ENCODE measurements at regions of chr15 and their contacts with region 1.

Region 1: GRCh38 chr15:74768771-74769342 is 13.0 kb upstream of the CSK start:
- DNase-seq: peak; percentile 42
- ATAC-seq: peak; percentile 67
- H3K4me3 ChIP-seq: peak overlapping the region; percentile 22 to 36; a peak in 3 of 4 replicates
- H3K27ac ChIP-seq: no peak overlapping the region
- H3K4me1 ChIP-seq: peaks cover 2 to 16% of the 10 kb centered on the region in 2 experiments; a peak in 3 of 4 replicates
- H3K27me3 ChIP-seq: no peaks in the 10 kb centered on the region
- CTCF ChIP-seq: peak; percentile 70 to 93 (median 90)
- POLR2A ChIP-seq: no peak
- RAD21 ChIP-seq: peak; percentile 94

Region 2: DNA sequence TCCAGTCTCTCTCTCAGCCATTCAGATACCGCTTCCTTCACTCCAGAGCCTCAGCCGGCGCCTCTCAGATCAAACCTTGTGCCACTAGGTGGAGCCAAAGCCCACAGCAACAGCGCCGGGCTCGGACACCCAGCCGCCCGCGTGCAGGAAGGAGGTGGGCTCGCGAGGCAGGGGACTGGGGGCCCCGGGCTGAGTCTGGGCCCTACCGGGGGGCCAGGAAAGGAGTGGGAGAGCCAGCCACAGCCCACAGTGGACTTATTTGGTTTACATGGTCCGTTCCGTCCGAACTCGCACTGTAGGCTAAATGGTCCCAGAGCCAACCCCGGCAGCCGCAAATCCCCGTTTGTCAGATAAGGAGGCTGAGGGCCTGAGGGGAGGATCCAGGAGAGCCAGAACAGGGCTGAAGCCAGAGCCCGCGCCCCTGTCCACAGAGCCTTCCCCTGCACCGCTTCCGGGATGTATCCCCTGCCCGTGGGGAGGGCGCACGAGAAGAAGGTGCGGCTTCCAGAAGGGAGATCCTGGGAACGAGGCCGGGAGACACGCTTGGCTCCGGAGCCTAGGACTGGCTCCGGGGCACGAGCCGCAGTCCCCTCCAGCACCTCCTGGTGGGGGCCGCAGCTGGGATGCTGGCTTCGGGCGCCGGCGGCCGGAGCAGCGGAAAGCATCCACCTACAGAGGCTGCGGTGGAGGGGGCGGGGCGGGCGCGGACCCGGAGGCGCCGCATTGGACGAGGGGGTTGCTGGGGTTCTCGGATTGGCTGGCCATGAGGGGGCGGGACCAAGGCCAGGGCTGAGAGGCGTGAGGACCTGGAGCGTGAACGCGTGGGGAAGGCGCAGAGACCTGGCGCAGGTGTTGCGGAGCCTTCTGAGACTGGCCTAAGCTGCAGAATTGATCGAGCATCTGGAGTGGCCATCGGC is 394.9 kb before region 1 on chr15:
- CTCF ChIA-PET with region 1: interaction called, 9 read pairs
- POLR2A ChIA-PET with region 1: no interaction called
- RAD21 ChIA-PET with region 1: no interaction called
- intact Hi-C with region 1: loop called (anchors 2 kb)
- DNase-seq: peak; percentile 82
- ATAC-seq: peak; percentile 93
- H3K4me3 ChIP-seq: peak overlapping the region; percentile 54 to 56
- H3K27ac ChIP-seq: peak overlapping the region; percentile 57
- H3K4me1 ChIP-seq: peaks cover 10 to 24% of the 10 kb centered on the region in 2 experiments; a peak in 3 of 4 replicates
- H3K27me3 ChIP-seq: peaks cover 14% of the 10 kb centered on the region
- CTCF ChIP-seq: peak in 2 of 3 experiments; percentile 88 to 89; a peak in 4 of 6 replicates
- POLR2A ChIP-seq: peak; percentile 47
- RAD21 ChIP-seq: no peak

Region 3: GRCh38 chr15:74635228-74635627 is 133.6 kb before region 1 on chr15:
- CTCF ChIA-PET with region 1: interaction called, 258 read pairs
- POLR2A ChIA-PET with region 1: interaction called, 6 read pairs
- RAD21 ChIA-PET with region 1: interaction called, 12 to 13 read pairs
- intact Hi-C with region 1: loop called (anchors 1 kb)
- DNase-seq: no peak
- ATAC-seq: peak; percentile 86
- H3K4me3 ChIP-seq: no peak overlapping the region
- H3K27ac ChIP-seq: no peak overlapping the region
- H3K4me1 ChIP-seq: no peaks in the 10 kb centered on the region
- H3K27me3 ChIP-seq: no peaks in the 10 kb centered on the region
- CTCF ChIP-seq: peak; percentile 87 to 94 (median 88)
- POLR2A ChIP-seq: no peak
- RAD21 ChIP-seq: peak; percentile 96

Region 4: GRCh38 chr15:74780523-74781430 is 11.9 kb after region 1 on chr15:
- CTCF ChIA-PET with region 1: interaction called, 10 read pairs
- POLR2A ChIA-PET with region 1: no interaction called
- RAD21 ChIA-PET with region 1: no interaction called
- intact Hi-C with region 1: no loop called
- DNase-seq: no peak
- ATAC-seq: no peak
- H3K4me3 ChIP-seq: peak overlapping the region; percentile 37 to 93; a peak in 3 of 4 replicates
- H3K27ac ChIP-seq: no peak overlapping the region; the same call in 1 of the 2 replicates
- H3K4me1 ChIP-seq: peaks cover 14 to 20% of the 10 kb centered on the region in 2 experiments
- H3K27me3 ChIP-seq: no peaks in the 10 kb centered on the region
- CTCF ChIP-seq: no peak
- POLR2A ChIP-seq: no peak
- RAD21 ChIP-seq: no peak

Region 5: GRCh38 chr15:74799856-74800547 is 31.1 kb after region 1 on chr15:
- CTCF ChIA-PET with region 1: interaction called, 5 read pairs
- POLR2A ChIA-PET with region 1: no interaction called
- RAD21 ChIA-PET with region 1: no interaction called
- intact Hi-C with region 1: loop called (anchors 2 kb)
- DNase-seq: peak; percentile 29
- ATAC-seq: peak; percentile 98
- H3K4me3 ChIP-seq: no peak overlapping the region
- H3K27ac ChIP-seq: peak overlapping the region; percentile 45
- H3K4me1 ChIP-seq: peaks cover 3 to 13% of the 10 kb centered on the region in 2 experiments; a peak in 3 of 4 replicates
- H3K27me3 ChIP-seq: no peaks in the 10 kb centered on the region
- CTCF ChIP-seq: peak; percentile 77 to 99 (median 94)
- POLR2A ChIP-seq: no peak
- RAD21 ChIP-seq: peak; percentile 79

Region 6: GRCh38 chr15:74835307-74835823 is 66.5 kb after region 1 on chr15:
- CTCF ChIA-PET with region 1: interaction called, 5 read pairs
- POLR2A ChIA-PET with region 1: no interaction called
- RAD21 ChIA-PET with region 1: no interaction called
- intact Hi-C with region 1: loop called (anchors 1 kb)
- DNase-seq: peak; percentile 69
- ATAC-seq: peak; percentile 97
- H3K4me3 ChIP-seq: no peak overlapping the region
- H3K27ac ChIP-seq: no peak overlapping the region; the same call in 1 of the 2 replicates
- H3K4me1 ChIP-seq: peaks cover 0 to 9% of the 10 kb centered on the region in 2 experiments; a peak in 2 of 4 replicates
- H3K27me3 ChIP-seq: no peaks in the 10 kb centered on the region
- CTCF ChIP-seq: peak; percentile 93 to 98 (median 96)
- POLR2A ChIP-seq: no peak
- RAD21 ChIP-seq: peak; percentile 78

Region 7: GRCh38 chr15:74950078-74951000 is 181.5 kb after region 1 on chr15:
- CTCF ChIA-PET with region 1: interaction called, 88 read pairs
- POLR2A ChIA-PET with region 1: interaction called, 3 read pairs
- RAD21 ChIA-PET with region 1: interaction called, 9 to 14 read pairs
- intact Hi-C with region 1: loop called (anchors 1 kb)
- DNase-seq: peak; percentile 60
- ATAC-seq: peak; percentile 70
- H3K4me3 ChIP-seq: no peak overlapping the region
- H3K27ac ChIP-seq: no peak overlapping the region
- H3K4me1 ChIP-seq: peaks cover 26 to 48% of the 10 kb centered on the region in 2 experiments
- H3K27me3 ChIP-seq: no peaks in the 10 kb centered on the region
- CTCF ChIP-seq: peak in 2 of 3 experiments; percentile 98 to 100; a peak in 4 of 6 replicates
- POLR2A ChIP-seq: no peak
- RAD21 ChIP-seq: no peak